Transverse colon (tissue), 4 donors: ENCODE measurements at regions of chr19 and their contacts with region 1.

Region 1: GRCh38 chr19:1540365-1540925 is 16.6 kb downstream of the PLK5 start:
- DNase-seq: no peak
- H3K4me3 ChIP-seq: no peak overlapping the region
- H3K27ac ChIP-seq: peak overlapping the region in 2 of 4 donors; percentile 45 to 66
- H3K4me1 ChIP-seq: peaks cover 0 to 3% (median 1%) of the 10 kb centered on the region in 4 donors
- H3K27me3 ChIP-seq: peaks cover 7% of the 10 kb centered on the region
- CTCF ChIP-seq: no peak
- EP300 ChIP-seq: no peak
- POLR2A ChIP-seq: no peak

Region 2: GRCh38 chr19:1555487-1556389 is 15.3 kb after region 1 on chr19:
- in situ Hi-C with region 1: no loop called
- intact Hi-C with region 1: no loop called
- DNase-seq: no peak
- H3K4me3 ChIP-seq: no peak overlapping the region
- H3K27ac ChIP-seq: no peak overlapping the region
- H3K4me1 ChIP-seq: no peaks in the 10 kb centered on the region
- H3K27me3 ChIP-seq: no peaks in the 10 kb centered on the region
- CTCF ChIP-seq: no peak
- EP300 ChIP-seq: no peak
- POLR2A ChIP-seq: no peak

Region 3: GRCh38 chr19:1672038-1672768 is 131.8 kb after region 1 on chr19:
- in situ Hi-C with region 1: loop called in 2 of 4 experiments (anchors 10 to 25 kb)
- intact Hi-C with region 1: no loop called
- DNase-seq: peak; percentile 45
- H3K4me3 ChIP-seq: peak overlapping the region in 2 of 4 donors; percentile 16 to 21
- H3K27ac ChIP-seq: no peak overlapping the region
- H3K4me1 ChIP-seq: peaks cover 8 to 19% (median 12%) of the 10 kb centered on the region in 4 donors
- H3K27me3 ChIP-seq: peaks cover 97% of the 10 kb centered on the region
- CTCF ChIP-seq: peak; percentile 81 to 96 (median 88)
- EP300 ChIP-seq: no peak
- POLR2A ChIP-seq: no peak

Region 4: GRCh38 chr19:1690699-1691307 is 150.4 kb after region 1 on chr19:
- in situ Hi-C with region 1: loop called in 1 of 4 experiments (anchors 25 kb)
- intact Hi-C with region 1: no loop called
- DNase-seq: peak; percentile 60
- H3K4me3 ChIP-seq: no peak overlapping the region
- H3K27ac ChIP-seq: no peak overlapping the region
- H3K4me1 ChIP-seq: no peaks in the 10 kb centered on the region
- H3K27me3 ChIP-seq: peaks cover 76% of the 10 kb centered on the region
- CTCF ChIP-seq: no peak
- EP300 ChIP-seq: no peak
- POLR2A ChIP-seq: no peak

Region 5: GRCh38 chr19:1767464-1767933 is 227.1 kb after region 1 on chr19:
- in situ Hi-C with region 1: no loop called
- intact Hi-C with region 1: loop called (anchors 10 kb)
- DNase-seq: peak; percentile 46
- H3K4me3 ChIP-seq: no peak overlapping the region
- H3K27ac ChIP-seq: no peak overlapping the region
- H3K4me1 ChIP-seq: no peaks in the 10 kb centered on the region
- H3K27me3 ChIP-seq: peaks cover 100% of the 10 kb centered on the region
- CTCF ChIP-seq: peak; percentile 91 to 97 (median 93)
- EP300 ChIP-seq: no peak
- POLR2A ChIP-seq: no peak

Region 6: DNA sequence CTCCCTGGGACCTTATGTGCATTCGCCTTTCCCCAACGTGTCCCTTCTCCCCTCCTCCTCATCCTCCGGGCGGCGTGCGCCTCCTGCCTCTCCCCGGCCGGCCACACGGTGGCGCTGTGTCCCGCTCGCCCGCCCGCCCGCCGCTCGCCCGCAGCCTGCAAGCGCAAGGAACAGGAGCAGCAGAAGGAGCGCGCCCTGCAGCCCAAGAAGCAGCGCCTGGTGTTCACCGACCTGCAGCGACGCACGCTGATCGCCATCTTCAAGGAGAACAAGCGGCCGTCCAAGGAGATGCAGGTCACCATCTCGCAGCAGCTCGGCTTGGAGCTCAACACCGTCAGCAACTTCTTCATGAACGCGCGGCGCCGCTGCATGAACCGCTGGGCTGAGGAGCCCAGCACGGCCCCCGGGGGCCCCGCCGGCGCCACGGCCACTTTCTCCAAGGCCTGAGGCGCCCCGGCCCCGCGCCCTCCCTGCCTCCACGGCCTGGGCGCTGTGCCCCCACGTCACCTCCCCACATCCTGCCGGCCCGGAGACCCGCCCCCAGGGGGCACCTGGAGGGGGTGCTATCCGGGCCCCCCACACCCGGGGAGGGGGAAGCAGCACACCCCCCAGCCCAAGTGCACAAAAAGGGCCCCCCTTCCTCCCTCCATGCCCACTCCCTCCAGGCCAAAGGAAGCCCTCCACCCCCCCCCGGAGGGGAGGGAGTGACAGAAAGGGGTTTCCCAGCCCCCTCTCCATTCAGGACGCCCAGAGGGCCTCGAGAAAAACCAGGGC is 234.7 kb after region 1 on chr19:
- in situ Hi-C with region 1: loop called in 3 of 4 experiments (anchors 25 kb)
- intact Hi-C with region 1: no loop called
- DNase-seq: no peak
- H3K4me3 ChIP-seq: no peak overlapping the region
- H3K27ac ChIP-seq: no peak overlapping the region
- H3K4me1 ChIP-seq: no peaks in the 10 kb centered on the region
- H3K27me3 ChIP-seq: peaks cover 98% of the 10 kb centered on the region
- CTCF ChIP-seq: peak; percentile 11 to 43 (median 40)
- EP300 ChIP-seq: no peak
- POLR2A ChIP-seq: no peak

Region 7: DNA sequence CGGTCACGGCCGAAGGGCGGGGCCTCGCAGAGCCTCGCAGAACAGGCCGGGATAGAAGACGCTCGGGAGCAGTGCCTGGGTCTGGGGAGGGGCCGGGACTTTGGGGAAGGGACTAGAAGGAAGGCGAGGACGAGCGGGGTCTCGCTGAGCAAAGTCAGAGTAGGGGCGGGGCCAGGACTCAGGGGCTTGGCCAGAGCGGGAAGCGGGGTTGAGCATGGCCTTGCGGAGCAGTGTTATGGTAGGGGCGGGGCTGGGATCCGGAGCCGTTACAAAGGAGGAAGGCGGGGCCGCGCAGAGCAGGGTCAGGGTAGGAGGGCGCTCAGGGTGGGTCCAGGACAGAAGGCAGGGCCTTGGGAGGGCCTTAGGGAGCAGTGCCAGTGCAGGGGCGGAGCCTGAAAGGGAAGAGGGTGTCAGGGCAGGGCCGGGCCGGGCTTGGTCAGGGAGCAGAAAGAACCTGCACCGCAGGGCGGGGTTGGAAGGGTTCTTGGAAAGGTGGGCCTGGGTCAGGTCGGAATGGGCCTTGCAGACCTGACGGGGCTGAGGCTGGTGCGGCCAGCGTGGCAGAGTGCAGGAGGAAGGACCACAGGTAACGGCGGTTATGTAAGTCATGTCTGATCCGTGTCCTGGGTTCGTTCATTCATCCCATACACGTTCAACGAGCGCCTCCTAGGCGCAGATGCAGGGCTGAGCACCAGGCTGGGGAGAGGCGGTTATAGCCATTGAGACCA is 272.2 kb after region 1 on chr19:
- in situ Hi-C with region 1: loop called in 1 of 4 experiments (anchors 25 kb)
- intact Hi-C with region 1: no loop called
- DNase-seq: peak; percentile 97
- H3K4me3 ChIP-seq: peak overlapping the region; percentile 13 to 65 (median 46)
- H3K27ac ChIP-seq: peak overlapping the region; percentile 60 to 86 (median 76)
- H3K4me1 ChIP-seq: peaks cover 11 to 21% (median 16%) of the 10 kb centered on the region in 4 donors
- H3K27me3 ChIP-seq: no peaks in the 10 kb centered on the region
- CTCF ChIP-seq: peak; percentile 44 to 67 (median 50)
- EP300 ChIP-seq: no peak
- POLR2A ChIP-seq: peak; percentile 57